ENCODE measurements at regions of chr12 and their contacts with region 1.

Region 1: DNA sequence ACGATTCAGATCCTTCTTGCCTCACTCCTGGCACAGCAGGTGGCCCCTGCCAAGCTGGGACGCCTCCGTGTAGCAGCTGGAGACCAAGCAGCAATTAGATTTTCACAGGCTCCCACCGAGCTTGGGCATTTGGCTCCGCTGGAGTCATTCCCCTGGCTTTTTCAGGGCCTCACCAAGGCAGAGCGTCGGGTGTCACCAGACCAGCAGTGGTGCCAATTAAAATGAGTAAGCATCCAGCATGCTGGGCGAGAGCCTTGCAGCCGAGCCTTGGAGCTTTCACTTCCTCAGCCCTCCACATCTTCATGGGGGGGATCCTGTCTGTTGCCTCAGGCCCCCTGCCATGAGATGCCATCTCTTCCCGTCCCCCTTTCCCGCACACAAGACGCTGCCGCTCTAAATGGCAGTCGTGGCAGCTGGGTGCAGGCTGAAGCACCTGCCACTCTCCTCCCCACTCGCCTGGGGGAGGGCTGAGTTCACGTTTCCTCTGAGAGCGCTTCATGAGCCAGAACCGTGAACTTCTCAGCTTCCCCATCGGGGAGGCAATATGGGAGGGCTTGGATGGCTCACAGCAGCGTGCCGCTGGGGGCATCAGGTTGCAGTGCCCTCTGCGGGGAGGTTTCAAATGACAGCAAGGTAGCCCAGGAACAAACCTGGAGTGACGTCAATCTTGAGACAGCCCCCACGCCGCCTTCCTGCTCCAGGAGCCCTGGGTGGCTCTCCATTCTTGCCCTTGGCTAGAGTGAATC is 11.7 kb downstream of the TPCN1 start:
- DNase-seq: no peak
- ATAC-seq: no peak
- H3K4me3 ChIP-seq: no peak overlapping the region
- H3K27ac ChIP-seq: no peak overlapping the region
- H3K4me1 ChIP-seq: peaks cover 71% of the 10 kb centered on the region
- H3K27me3 ChIP-seq: no peaks in the 10 kb centered on the region
- CTCF ChIP-seq: no peak
- EP300 ChIP-seq: no peak
- POLR2A ChIP-seq: no peak
- RAD21 ChIP-seq: no peak

Region 2: GRCh38 chr12:113184900-113185773 is 47.9 kb before region 1 on chr12 and contains the starts of genes DDX54 and RITA1:
- CTCF ChIA-PET with region 1: no interaction called
- POLR2A ChIA-PET with region 1: interaction called, 14 read pairs
- in situ Hi-C with region 1: no loop called
- intact Hi-C with region 1: no loop called
- DNase-seq: peak; percentile 92
- ATAC-seq: peak; percentile 91
- H3K4me3 ChIP-seq: peak within 1 kb of the TSS; percentile 70 to 96 (median 86)
- H3K27ac ChIP-seq: peak within 1 kb of the TSS; percentile 93
- H3K4me1 ChIP-seq: peaks cover 34% of the 10 kb centered on the region
- H3K27me3 ChIP-seq: no peaks in the 10 kb centered on the region
- CTCF ChIP-seq: peak; percentile 19; the same call in 1 of the 2 replicates
- EP300 ChIP-seq: peak in 1 of 2 experiments; percentile 14; a peak in 1 of 4 replicates
- POLR2A ChIP-seq: peak; percentile 70 to 86; a peak in 3 of 4 replicates
- RAD21 ChIP-seq: no peak
- total RNA-seq, gene DDX54: 45.1 and 59.7 TPM in 2 replicates
- total RNA-seq, gene RITA1: 28.1 and 28.9 TPM in 2 replicates

Region 3: GRCh38 chr12:113208041-113208934 is 24.7 kb before region 1 on chr12:
- CTCF ChIA-PET with region 1: no interaction called
- POLR2A ChIA-PET with region 1: interaction called, 11 read pairs
- in situ Hi-C with region 1: no loop called
- intact Hi-C with region 1: no loop called
- DNase-seq: no peak
- ATAC-seq: peak; percentile 34; the same call in 2 of the 3 replicates
- H3K4me3 ChIP-seq: no peak overlapping the region
- H3K27ac ChIP-seq: no peak overlapping the region
- H3K4me1 ChIP-seq: peaks cover 49% of the 10 kb centered on the region
- H3K27me3 ChIP-seq: no peaks in the 10 kb centered on the region
- CTCF ChIP-seq: no peak
- EP300 ChIP-seq: no peak
- POLR2A ChIP-seq: no peak
- RAD21 ChIP-seq: no peak

Region 4: DNA sequence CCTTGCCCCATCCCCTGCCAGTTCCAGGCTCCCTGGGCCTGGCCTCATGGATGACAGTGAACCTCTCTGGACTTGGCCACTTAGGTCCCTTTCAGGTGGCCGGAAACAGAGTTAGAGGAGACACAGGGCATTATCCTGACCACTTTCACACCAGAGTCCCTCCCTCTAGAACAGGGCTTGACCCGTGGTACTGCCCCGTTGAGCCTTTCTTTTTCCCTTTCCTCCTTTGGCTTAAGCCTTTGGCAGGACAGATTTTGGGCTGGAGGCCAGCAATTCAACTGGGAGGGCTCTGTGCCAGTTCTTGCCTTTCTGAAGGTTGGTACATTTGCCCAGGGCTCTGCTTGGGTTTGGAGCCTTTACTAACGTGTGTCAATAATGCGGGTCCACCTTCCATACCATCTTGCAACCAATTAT is 11.0 kb after region 1 on chr12:
- CTCF ChIA-PET with region 1: no interaction called
- POLR2A ChIA-PET with region 1: interaction called, 21 read pairs
- in situ Hi-C with region 1: no loop called
- intact Hi-C with region 1: loop called (anchors 2 kb)
- DNase-seq: no peak
- ATAC-seq: no peak
- H3K4me3 ChIP-seq: no peak overlapping the region
- H3K27ac ChIP-seq: no peak overlapping the region
- H3K4me1 ChIP-seq: peaks cover 53% of the 10 kb centered on the region
- H3K27me3 ChIP-seq: no peaks in the 10 kb centered on the region
- CTCF ChIP-seq: no peak
- EP300 ChIP-seq: no peak
- POLR2A ChIP-seq: no peak
- RAD21 ChIP-seq: no peak

Region 5: DNA sequence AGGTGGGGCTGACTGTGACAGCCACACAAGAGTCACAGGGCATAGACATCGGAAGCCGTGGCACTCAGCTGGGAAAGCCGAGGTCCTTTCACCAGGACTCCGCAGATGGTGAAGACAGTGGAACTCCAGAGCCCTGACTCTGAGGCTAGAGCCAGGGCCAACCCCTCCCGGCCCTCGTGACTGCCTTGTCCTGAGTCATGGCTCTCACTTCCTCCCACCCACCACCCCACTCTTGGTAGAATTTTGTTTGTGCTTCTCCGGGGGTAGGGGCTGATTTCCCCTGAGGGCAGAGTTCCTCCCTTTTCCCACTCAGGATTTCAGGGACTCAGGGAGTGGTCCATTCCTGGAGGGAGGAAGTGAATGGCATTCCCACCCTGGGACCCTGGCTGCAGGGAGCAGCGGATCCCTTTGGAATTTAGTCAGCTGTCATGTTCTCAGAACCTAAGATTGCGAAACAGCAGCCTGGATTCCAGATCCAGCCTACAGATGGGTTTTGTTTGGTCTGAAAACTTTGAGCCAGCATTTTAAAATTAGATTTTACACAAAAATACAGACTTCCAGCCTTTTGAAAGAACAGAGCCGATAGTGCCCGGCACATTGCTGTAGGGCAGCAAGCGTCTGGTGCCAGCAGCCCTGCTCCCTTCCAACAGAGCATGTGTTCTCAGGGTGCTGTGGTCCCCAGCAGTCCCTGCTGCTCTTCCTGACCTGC is 39.0 kb after region 1 on chr12:
- CTCF ChIA-PET with region 1: no interaction called
- POLR2A ChIA-PET with region 1: interaction called, 10 read pairs
- in situ Hi-C with region 1: no loop called
- intact Hi-C with region 1: no loop called
- DNase-seq: peak; percentile 74
- ATAC-seq: peak; percentile 87
- H3K4me3 ChIP-seq: peak overlapping the region in 1 of 3 experiments; percentile 30; a peak in 1 of 6 replicates
- H3K27ac ChIP-seq: peak overlapping the region; percentile 41
- H3K4me1 ChIP-seq: peaks cover 43% of the 10 kb centered on the region
- H3K27me3 ChIP-seq: no peaks in the 10 kb centered on the region
- CTCF ChIP-seq: no peak
- EP300 ChIP-seq: no peak; a peak in 1 of 4 replicates
- POLR2A ChIP-seq: no peak
- RAD21 ChIP-seq: no peak

Region 6: GRCh38 chr12:114361545-114361944 is 1128.5 kb after region 1 on chr12:
- CTCF ChIA-PET with region 1: no interaction called
- POLR2A ChIA-PET with region 1: no interaction called
- in situ Hi-C with region 1: no loop called
- intact Hi-C with region 1: no loop called
- DNase-seq: no peak
- ATAC-seq: no peak
- H3K4me3 ChIP-seq: no peak overlapping the region
- H3K27ac ChIP-seq: no peak overlapping the region
- H3K4me1 ChIP-seq: no peaks in the 10 kb centered on the region
- H3K27me3 ChIP-seq: no peaks in the 10 kb centered on the region
- CTCF ChIP-seq: no peak
- EP300 ChIP-seq: no peak
- POLR2A ChIP-seq: no peak
- RAD21 ChIP-seq: no peak